HEK293 (cell line): ENCODE measurements at regions of chr9 and their contacts with region 1.

Region 1: DNA sequence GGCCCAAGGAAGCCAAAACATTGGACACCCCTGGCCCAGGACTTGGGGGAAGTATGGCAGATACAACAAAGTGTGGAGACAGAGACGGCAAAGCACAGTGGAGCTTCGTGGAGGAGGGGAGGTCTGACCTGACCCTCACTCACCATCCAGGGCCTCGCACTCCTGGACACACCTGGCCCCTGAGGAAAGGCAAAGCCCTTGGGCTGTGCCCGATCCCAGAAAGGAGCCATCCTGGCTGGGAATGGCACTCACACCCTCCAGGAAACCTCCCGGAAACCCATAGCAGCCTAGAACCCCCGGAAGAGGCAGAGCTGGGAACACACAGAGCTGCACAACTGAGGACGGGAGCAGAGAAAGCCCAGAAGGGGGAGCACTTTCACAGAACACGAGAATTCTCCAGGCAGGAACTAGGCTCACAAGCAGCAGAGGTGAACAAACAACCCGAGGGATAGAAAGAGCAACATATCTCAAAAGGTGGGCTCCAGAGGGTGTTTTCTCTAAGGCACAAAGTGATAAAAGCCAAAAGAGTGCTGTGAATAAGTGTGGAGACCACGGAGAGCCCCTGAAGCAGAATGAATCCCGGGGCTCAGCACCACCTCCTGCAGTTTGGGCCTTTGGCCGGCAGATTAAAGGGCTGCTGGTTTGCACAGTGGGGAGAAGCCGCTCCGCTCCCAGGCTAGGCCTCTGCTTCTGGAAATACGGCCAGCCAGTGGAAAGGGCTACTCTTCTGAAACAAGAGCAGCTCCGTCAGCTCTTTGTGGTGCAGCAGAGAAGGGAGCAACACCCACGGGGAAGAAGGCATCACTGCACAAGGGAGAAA is 108.2 kb downstream of the UBE2R2 start:
- H3K4me3 ChIP-seq: no peak overlapping the region
- H3K27ac ChIP-seq: no peak overlapping the region
- H3K4me1 ChIP-seq: no peaks in the 10 kb centered on the region
- CTCF ChIP-seq: no peak

Region 2: GRCh38 chr9:33913541-33913940 is 11.6 kb before region 1 on chr9:
- CTCF ChIA-PET with region 1: interaction called, 34 read pairs
- POLR2A ChIA-PET with region 1: no interaction called
- H3K4me3 ChIP-seq: no peak overlapping the region
- H3K27ac ChIP-seq: no peak overlapping the region
- H3K4me1 ChIP-seq: no peaks in the 10 kb centered on the region
- CTCF ChIP-seq: no peak

Region 3: DNA sequence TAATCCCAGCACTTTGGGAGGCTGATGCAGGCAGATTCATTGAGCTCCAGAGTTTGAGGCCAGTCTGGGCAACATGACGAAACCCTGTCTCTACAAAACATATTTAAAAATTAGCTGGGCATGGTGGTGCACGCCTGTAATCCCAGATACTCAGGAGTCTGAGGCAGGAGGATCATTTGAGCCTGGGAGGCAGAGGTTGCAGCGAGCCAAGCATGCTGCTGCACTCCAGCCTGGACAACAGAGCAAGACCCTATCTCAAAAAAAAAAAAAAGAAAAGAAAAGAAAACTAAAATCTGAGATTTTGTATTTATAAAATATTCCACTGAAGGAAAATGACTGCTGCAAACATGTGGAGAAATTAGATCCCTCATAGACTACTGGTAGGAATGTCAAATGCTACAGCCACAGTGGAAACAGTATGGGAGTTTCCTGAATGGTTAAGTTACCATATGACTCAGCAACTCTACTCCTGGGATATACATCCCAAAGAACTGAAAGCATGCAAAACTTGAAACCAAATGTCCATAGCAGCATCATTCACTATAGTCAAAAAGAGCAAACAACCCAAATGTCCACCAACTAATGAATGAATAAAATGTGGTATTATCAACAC is 17.4 kb after region 1 on chr9:
- CTCF ChIA-PET with region 1: interaction called, 21 read pairs
- POLR2A ChIA-PET with region 1: interaction called, 4 read pairs
- H3K4me3 ChIP-seq: no peak overlapping the region
- H3K27ac ChIP-seq: no peak overlapping the region
- H3K4me1 ChIP-seq: no peaks in the 10 kb centered on the region
- CTCF ChIP-seq: no peak